ENCODE measurements at regions of chr17 and their contacts with region 1.

Region 1: GRCh38 chr17:35189291-35189690 is 4.9 kb downstream of the SLC35G3 start:
- DNase-seq: no peak
- ATAC-seq: no peak
- H3K4me3 ChIP-seq: no peak overlapping the region
- H3K27ac ChIP-seq: no peak overlapping the region
- H3K4me1 ChIP-seq: no peaks in the 10 kb centered on the region
- H3K27me3 ChIP-seq: peaks cover 6% of the 10 kb centered on the region
- CTCF ChIP-seq: no peak
- POLR2A ChIP-seq: no peak
- RAD21 ChIP-seq: no peak

Region 2: DNA sequence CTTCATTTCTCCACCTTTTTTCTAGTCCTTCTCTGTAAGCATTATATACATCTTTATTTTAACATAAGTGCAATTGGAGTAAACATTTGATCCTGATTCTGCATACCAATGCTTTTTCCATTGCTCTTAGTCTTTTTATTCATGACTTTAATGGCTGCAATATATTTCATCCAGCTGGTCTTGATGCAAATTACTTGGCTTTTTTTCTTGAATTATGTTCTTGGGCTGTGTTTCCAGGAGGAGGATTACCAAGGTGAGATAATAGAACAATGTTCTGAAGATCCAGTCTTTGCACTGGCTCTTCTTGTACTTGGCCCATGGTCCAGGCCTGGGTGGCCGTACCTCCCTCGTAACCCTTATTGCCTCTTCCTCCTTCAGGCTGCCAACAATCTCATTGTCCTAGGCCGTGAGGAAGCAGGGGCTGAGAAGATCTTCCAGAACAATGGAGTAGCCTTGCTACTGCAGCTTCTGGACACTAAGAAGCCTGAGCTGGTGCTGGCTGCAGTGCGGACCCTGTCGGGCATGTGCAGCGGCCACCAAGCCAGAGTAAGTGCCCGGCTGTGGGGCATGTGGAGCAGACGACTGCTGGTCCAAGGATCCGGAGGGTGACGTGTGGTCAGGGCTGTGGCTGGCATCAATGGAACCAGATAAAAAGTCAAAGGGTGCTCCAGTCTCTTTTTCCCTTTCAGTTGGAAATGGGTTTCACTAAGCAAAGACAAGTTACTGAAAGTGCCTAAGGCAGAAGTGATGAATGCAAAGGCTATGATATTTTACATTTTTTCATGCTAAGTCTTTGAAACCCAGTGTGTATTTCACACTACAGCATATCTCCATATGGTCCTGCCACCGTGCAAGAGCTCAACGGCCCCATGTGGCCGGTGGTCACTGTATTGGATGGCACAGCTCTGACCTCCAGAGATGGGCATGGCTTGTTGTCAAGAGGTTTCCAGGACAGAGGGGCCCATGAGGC is 34.8 kb before region 1 on chr17:
- CTCF ChIA-PET with region 1: no interaction called
- POLR2A ChIA-PET with region 1: no interaction called
- dilution Hi-C with region 1: no loop called
- in situ Hi-C with region 1: no loop called
- intact Hi-C with region 1: no loop called
- DNase-seq: no peak
- ATAC-seq: no peak
- H3K4me3 ChIP-seq: no peak overlapping the region
- H3K27ac ChIP-seq: no peak overlapping the region
- H3K4me1 ChIP-seq: no peaks in the 10 kb centered on the region
- H3K27me3 ChIP-seq: peaks cover 17% of the 10 kb centered on the region
- CTCF ChIP-seq: no peak
- POLR2A ChIP-seq: no peak
- RAD21 ChIP-seq: no peak

Region 3: DNA sequence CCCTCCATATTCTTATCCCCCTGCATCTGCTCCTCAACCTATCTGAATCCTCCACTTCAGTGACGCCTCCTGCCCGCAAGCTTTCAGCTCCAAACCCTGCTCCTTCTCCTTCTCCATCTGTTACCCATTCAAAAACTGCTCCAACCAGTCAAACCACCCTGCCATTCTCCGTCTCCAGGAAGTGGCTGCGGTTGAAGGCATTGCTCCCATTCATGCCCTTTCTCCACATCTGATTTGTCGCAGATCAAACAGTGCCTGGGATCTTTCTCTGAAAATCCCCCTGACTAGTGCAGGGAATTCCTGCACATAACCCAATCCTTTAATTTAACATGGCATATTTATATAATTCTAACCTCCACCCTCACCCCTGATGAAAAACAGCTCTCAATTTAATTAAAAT is 109.8 kb after region 1 on chr17:
- CTCF ChIA-PET with region 1: no interaction called
- POLR2A ChIA-PET with region 1: no interaction called
- dilution Hi-C with region 1: no loop called
- in situ Hi-C with region 1: no loop called
- intact Hi-C with region 1: loop called (anchors 10 kb)
- DNase-seq: no peak
- ATAC-seq: no peak
- H3K4me3 ChIP-seq: no peak overlapping the region
- H3K27ac ChIP-seq: no peak overlapping the region
- H3K4me1 ChIP-seq: no peaks in the 10 kb centered on the region
- H3K27me3 ChIP-seq: no peaks in the 10 kb centered on the region
- CTCF ChIP-seq: no peak
- POLR2A ChIP-seq: no peak
- RAD21 ChIP-seq: no peak

Measured in IMR-90 (cell line).